ENCODE measurements at regions of chr11 and their contacts with region 1.

Region 1: DNA sequence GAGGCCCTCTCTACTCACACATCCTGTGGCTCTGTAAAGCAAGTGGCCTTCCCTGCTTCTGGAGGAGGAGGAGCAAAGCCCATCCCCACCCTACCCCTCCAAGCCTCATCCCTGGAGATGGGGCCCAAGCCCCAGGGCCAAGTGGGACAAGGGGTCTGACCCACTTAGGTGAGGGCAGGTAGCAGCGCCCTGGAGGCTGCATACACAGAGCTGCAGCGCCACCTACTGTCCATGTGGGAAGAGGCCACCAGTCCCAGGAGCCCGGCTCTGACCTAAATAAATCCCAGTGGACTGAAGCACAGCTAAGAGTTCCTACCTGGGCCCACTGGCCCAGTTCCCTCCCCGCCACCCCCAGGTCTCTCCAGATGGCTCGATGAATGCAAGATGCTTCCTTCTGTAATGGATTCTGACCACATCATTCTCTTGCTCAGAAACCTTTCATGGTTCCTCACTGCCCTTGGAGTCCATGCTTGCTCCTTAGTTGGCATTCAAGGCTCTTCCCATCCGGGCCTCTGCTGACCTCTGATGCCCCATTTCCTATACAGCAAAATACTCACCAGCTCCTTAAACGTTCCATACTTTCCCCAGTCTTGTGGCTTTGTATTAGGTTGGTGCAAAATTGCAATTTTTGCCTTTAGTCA is 62.1 kb downstream of the THAP12 start:
- DNase-seq: peak; percentile 70
- H3K4me3 Mint-ChIP-seq: no peak overlapping the region
- H3K27ac Mint-ChIP-seq: no peak overlapping the region
- H3K4me1 Mint-ChIP-seq: peaks cover 11% of the 10 kb centered on the region
- H3K27me3 Mint-ChIP-seq: peaks cover 31% of the 10 kb centered on the region

Region 2: DNA sequence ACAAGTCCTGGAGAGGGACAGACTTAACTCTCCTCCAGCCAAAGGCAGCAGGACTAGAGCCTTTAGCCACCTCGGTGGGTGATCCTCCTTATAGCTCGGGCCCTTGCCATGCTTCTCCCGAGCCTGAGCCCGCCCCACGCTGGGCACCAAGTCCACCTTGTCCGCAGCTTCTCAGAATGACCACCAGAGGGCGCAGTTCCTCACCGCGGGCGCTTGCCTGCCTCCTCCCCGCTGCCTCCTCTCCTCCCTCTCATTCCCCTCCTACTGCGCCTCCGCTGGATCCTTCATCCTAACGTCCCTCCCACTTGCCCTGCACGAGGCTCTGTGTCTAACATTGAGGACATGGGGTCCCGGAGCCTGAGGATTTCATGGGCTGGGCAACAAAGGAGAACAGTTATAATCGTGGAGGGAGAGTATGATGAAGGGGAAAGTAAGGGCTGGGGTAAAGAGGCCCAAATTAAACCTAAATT is 612.6 kb before region 1 on chr11:
- intact Hi-C with region 1: loop called (anchors 5 kb)
- DNase-seq: peak; percentile 48
- H3K4me3 Mint-ChIP-seq: no peak overlapping the region
- H3K27ac Mint-ChIP-seq: no peak overlapping the region
- H3K4me1 Mint-ChIP-seq: peaks cover 8% of the 10 kb centered on the region
- H3K27me3 Mint-ChIP-seq: peaks cover 23% of the 10 kb centered on the region

Region 3: GRCh38 chr11:75721855-75722668 is 596.8 kb before region 1 on chr11:
- intact Hi-C with region 1: loop called (anchors 2 kb)
- DNase-seq: no peak
- H3K4me3 Mint-ChIP-seq: no peak overlapping the region
- H3K27ac Mint-ChIP-seq: no peak overlapping the region
- H3K4me1 Mint-ChIP-seq: no peaks in the 10 kb centered on the region
- H3K27me3 Mint-ChIP-seq: peaks cover 2% of the 10 kb centered on the region

Region 4: DNA sequence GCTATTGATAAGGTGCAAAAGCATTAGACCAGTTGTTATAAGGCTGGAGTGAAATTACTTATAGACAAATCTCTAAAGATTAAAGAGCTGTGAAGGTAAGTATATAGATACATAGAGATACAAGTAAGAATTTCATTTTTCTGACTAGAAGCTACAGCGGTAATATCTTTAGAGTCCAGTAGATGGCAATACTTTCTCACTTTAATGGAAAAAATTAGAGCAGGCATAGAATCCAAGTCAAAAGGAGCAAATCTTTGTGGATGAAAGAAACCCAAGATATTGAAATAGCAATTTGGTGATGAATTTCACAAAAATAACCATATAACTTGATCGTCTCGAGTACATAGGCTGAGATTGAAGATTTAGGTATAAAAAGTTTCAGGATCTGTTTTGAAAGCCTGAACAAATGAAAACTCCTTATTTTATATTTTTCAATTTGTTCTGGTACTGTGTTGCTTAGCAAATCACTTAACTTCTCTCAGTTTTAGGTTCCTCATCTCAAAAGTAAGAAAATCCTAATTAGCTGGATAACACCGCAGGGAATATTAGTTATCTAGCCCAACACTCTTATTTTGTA is 421.9 kb before region 1 on chr11:
- intact Hi-C with region 1: loop called (anchors 1 kb)
- DNase-seq: no peak
- H3K4me3 Mint-ChIP-seq: no peak overlapping the region
- H3K27ac Mint-ChIP-seq: no peak overlapping the region
- H3K4me1 Mint-ChIP-seq: peaks cover 3% of the 10 kb centered on the region
- H3K27me3 Mint-ChIP-seq: no peaks in the 10 kb centered on the region

Region 5: DNA sequence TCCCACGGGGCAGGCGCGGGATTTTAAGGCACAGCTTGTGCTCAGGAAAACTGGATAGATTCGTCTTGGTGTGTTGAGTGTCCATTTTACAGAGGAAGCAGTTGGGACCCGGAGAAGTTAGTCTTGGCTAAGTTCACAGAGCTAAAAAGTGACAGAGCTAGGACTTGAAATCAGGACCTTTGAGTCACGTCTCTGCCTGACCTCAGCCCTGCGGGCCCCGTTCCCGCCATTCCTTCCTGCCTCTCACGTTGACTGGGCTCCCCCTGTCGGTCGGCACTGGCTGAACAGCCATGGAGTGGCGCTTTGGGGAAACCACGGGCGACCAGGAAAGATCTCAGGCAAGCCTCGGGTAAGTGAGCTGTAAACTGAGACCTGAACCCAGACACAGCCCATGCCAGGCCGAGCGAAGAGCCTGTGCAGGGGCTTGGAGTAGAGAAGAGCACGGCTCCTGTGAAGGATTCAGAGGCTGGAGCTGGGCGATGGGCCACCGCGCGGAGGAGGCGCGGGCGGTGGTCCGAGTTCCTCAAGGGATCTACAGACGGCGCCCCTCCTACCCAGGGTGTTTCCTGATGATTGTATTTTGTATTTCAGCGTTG is 166.7 kb before region 1 on chr11:
- intact Hi-C with region 1: loop called (anchors 5 kb)
- DNase-seq: peak; percentile 73
- H3K4me3 Mint-ChIP-seq: peak overlapping the region; percentile 49
- H3K27ac Mint-ChIP-seq: no peak overlapping the region
- H3K4me1 Mint-ChIP-seq: peaks cover 22% of the 10 kb centered on the region
- H3K27me3 Mint-ChIP-seq: peaks cover 6% of the 10 kb centered on the region

Region 6: GRCh38 chr11:76207642-76208401 is 111.0 kb before region 1 on chr11:
- intact Hi-C with region 1: loop called (anchors 1 kb)
- DNase-seq: peak; percentile 70
- H3K4me3 Mint-ChIP-seq: peak overlapping the region; percentile 73
- H3K27ac Mint-ChIP-seq: no peak overlapping the region
- H3K4me1 Mint-ChIP-seq: peaks cover 12% of the 10 kb centered on the region
- H3K27me3 Mint-ChIP-seq: peaks cover 56% of the 10 kb centered on the region

Region 7: GRCh38 chr11:76235233-76236091 is 83.4 kb before region 1 on chr11:
- intact Hi-C with region 1: loop called (anchors 1 kb)
- DNase-seq: peak; percentile 85
- H3K4me3 Mint-ChIP-seq: peak overlapping the region; percentile 92
- H3K27ac Mint-ChIP-seq: peak overlapping the region; percentile 84
- H3K4me1 Mint-ChIP-seq: peaks cover 50% of the 10 kb centered on the region
- H3K27me3 Mint-ChIP-seq: peaks cover 30% of the 10 kb centered on the region